ENCODE measurements at regions of chr17 and their contacts with region 1.

Region 1: DNA sequence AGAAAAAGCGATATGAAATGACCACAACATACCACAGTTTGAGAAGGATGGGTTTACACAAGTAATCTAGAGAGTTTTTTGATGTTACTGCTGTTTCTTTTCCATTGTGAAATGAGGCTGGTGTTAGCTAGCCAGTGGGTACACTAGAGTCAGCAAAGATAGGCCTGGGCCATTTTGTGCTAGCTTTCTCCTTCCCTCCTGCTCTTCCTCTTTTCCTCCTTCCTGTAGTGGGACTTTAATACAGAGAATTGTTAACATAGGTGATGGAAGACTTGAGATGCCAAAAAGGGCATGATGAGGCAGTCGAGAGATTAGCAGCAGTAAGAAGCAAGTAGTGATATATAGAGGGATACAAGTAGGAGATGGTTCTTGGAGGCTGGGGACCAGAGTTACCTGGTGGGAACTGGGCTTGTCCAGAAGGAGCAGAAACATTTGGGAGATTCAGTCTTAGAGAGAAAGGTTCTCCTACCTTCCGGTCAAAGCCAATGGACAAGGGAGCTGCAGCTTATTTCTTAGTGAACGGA is 7.7 kb downstream of the NSRP1 start:
- DNase-seq: no peak
- ATAC-seq: no peak
- H3K4me3 ChIP-seq: no peak overlapping the region
- H3K27ac ChIP-seq: no peak overlapping the region
- H3K4me1 ChIP-seq: peaks cover 7% of the 10 kb centered on the region; the same call in 1 of the 2 replicates
- H3K27me3 ChIP-seq: no peaks in the 10 kb centered on the region
- CTCF ChIP-seq: no peak
- EP300 ChIP-seq: no peak
- POLR2A ChIP-seq: no peak
- RAD21 ChIP-seq: no peak

Region 2: DNA sequence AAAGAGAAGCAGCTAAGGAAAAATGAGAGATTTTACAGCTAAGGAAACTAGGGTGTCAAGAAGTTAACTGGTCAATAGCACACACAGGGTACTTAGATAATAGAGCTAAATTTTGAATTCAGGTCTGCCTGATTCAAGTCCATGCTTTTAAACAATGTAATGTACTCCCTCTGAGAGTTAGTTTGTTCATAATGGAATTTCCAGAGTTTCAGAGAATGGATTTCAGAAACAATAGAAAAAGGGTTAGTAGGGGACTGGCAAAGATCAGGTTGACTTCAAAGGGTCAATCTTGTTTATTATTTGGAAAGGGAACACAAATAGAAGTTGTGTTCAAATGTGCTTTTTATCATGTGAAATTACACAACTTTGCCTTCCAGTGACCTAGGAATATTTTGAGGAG is 10.2 kb after region 1 on chr17:
- CTCF ChIA-PET with region 1: interaction called, 35 read pairs
- POLR2A ChIA-PET with region 1: interaction called, 5 read pairs
- RAD21 ChIA-PET with region 1: no interaction called
- SMC1A ChIA-PET with region 1: interaction called, 8 read pairs
- in situ Hi-C with region 1: no loop called
- intact Hi-C with region 1: no loop called
- DNase-seq: no peak
- ATAC-seq: no peak
- H3K4me3 ChIP-seq: no peak overlapping the region
- H3K27ac ChIP-seq: no peak overlapping the region
- H3K4me1 ChIP-seq: no peaks in the 10 kb centered on the region
- H3K27me3 ChIP-seq: no peaks in the 10 kb centered on the region
- CTCF ChIP-seq: no peak
- EP300 ChIP-seq: no peak
- POLR2A ChIP-seq: no peak
- RAD21 ChIP-seq: no peak

Region 3: GRCh38 chr17:30173649-30174048 is 49.3 kb after region 1 on chr17:
- CTCF ChIA-PET with region 1: interaction called, 13 read pairs
- POLR2A ChIA-PET with region 1: no interaction called
- RAD21 ChIA-PET with region 1: interaction called, 6 read pairs
- SMC1A ChIA-PET with region 1: interaction called, 9 read pairs
- in situ Hi-C with region 1: no loop called
- intact Hi-C with region 1: loop called (anchors 5 kb)
- DNase-seq: peak; percentile 68
- ATAC-seq: peak; percentile 98
- H3K4me3 ChIP-seq: no peak overlapping the region
- H3K27ac ChIP-seq: peak overlapping the region; percentile 33; the same call in 1 of the 2 replicates
- H3K4me1 ChIP-seq: peaks cover 33% of the 10 kb centered on the region
- H3K27me3 ChIP-seq: no peaks in the 10 kb centered on the region
- CTCF ChIP-seq: no peak
- EP300 ChIP-seq: peak; percentile 67 to 93
- POLR2A ChIP-seq: no peak
- RAD21 ChIP-seq: no peak

Region 4: GRCh38 chr17:30212750-30213149 is 88.4 kb after region 1 on chr17:
- CTCF ChIA-PET with region 1: interaction called, 18 read pairs
- POLR2A ChIA-PET with region 1: no interaction called
- RAD21 ChIA-PET with region 1: interaction called, 5 read pairs
- SMC1A ChIA-PET with region 1: interaction called, 4 read pairs
- in situ Hi-C with region 1: no loop called
- intact Hi-C with region 1: no loop called
- DNase-seq: peak; percentile 72
- ATAC-seq: peak; percentile 91
- H3K4me3 ChIP-seq: peak overlapping the region; percentile 19; the same call in 1 of the 2 replicates
- H3K27ac ChIP-seq: peak overlapping the region; percentile 85
- H3K4me1 ChIP-seq: peaks cover 36% of the 10 kb centered on the region
- H3K27me3 ChIP-seq: no peaks in the 10 kb centered on the region
- CTCF ChIP-seq: peak; percentile 0 to 47 (median 34); a peak in 3 of 6 replicates
- EP300 ChIP-seq: peak; percentile 32 to 50; a peak in 2 of 4 replicates
- POLR2A ChIP-seq: peak; percentile 49; the same call in 1 of the 2 replicates
- RAD21 ChIP-seq: 0 out of 2 replicates have a peak, but pooled peaks have one; percentile 29

Region 5: DNA sequence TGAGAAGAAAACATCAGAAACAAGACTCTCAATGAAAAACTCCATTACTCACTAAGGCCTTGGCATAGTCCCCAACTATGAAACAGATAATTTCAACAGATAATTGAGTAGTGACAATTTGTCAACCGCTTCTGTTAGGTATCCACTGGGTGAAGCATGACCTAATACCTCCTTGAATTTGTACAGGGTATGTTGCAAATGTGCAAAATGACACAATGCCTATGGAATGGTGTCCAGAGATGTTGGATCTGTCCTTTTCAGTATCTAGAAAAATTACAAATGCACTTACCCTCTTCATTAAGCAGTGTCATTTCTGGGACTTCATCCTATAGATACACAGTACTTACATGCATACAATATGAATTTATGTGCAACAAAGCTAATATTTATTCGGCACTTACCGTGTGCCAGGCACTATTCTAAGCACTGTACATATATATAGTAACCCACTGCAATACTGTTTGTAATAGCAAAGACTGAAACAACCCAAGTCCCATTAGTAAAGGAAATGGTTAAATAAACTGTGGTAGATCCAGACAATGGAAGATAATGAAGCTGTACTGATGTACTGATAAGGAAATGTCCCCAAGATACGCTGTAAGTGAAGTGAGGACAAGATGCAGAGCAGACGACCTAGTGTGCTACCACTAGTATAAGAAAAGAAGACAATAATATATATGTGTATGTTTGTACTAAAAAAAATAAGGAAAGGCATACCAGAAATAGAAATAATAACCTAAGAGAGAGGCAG is 132.6 kb after region 1 on chr17:
- CTCF ChIA-PET with region 1: interaction called, 12 read pairs
- POLR2A ChIA-PET with region 1: no interaction called
- RAD21 ChIA-PET with region 1: interaction called, 3 read pairs
- SMC1A ChIA-PET with region 1: interaction called, 4 read pairs
- in situ Hi-C with region 1: no loop called
- intact Hi-C with region 1: no loop called
- DNase-seq: no peak
- ATAC-seq: no peak
- H3K4me3 ChIP-seq: no peak overlapping the region
- H3K27ac ChIP-seq: no peak overlapping the region
- H3K4me1 ChIP-seq: no peaks in the 10 kb centered on the region
- H3K27me3 ChIP-seq: no peaks in the 10 kb centered on the region
- CTCF ChIP-seq: no peak
- EP300 ChIP-seq: no peak
- POLR2A ChIP-seq: no peak
- RAD21 ChIP-seq: no peak

Region 6: GRCh38 chr17:30323895-30324319 is 199.6 kb after region 1 on chr17:
- CTCF ChIA-PET with region 1: interaction called, 17 read pairs
- POLR2A ChIA-PET with region 1: no interaction called
- RAD21 ChIA-PET with region 1: interaction called, 7 read pairs
- SMC1A ChIA-PET with region 1: interaction called, 14 read pairs
- in situ Hi-C with region 1: no loop called
- intact Hi-C with region 1: no loop called
- DNase-seq: no peak
- ATAC-seq: peak; percentile 86
- H3K4me3 ChIP-seq: no peak overlapping the region
- H3K27ac ChIP-seq: no peak overlapping the region
- H3K4me1 ChIP-seq: peaks cover 17% of the 10 kb centered on the region
- H3K27me3 ChIP-seq: no peaks in the 10 kb centered on the region; a peak in 1 of 4 replicates
- CTCF ChIP-seq: no peak
- EP300 ChIP-seq: no peak
- POLR2A ChIP-seq: no peak
- RAD21 ChIP-seq: no peak

Region 7: GRCh38 chr17:30716461-30717300 is 592.3 kb after region 1 on chr17:
- CTCF ChIA-PET with region 1: no interaction called
- POLR2A ChIA-PET with region 1: no interaction called
- RAD21 ChIA-PET with region 1: no interaction called
- SMC1A ChIA-PET with region 1: no interaction called
- in situ Hi-C with region 1: loop called (anchors 10 kb)
- intact Hi-C with region 1: no loop called
- DNase-seq: no peak
- ATAC-seq: peak; percentile 12; the same call in 1 of the 3 replicates
- H3K4me3 ChIP-seq: no peak overlapping the region
- H3K27ac ChIP-seq: no peak overlapping the region
- H3K4me1 ChIP-seq: no peaks in the 10 kb centered on the region; the same call in 1 of the 2 replicates
- H3K27me3 ChIP-seq: no peaks in the 10 kb centered on the region
- CTCF ChIP-seq: peak; percentile 11 to 38 (median 28); a peak in 4 of 6 replicates
- EP300 ChIP-seq: no peak
- POLR2A ChIP-seq: no peak
- RAD21 ChIP-seq: peak; percentile 26; the same call in 1 of the 2 replicates

Measured in GM12878 (cell line).